HEK293T (cell line): ENCODE measurements at regions of chr7 and their contacts with region 1.

Region 1: DNA sequence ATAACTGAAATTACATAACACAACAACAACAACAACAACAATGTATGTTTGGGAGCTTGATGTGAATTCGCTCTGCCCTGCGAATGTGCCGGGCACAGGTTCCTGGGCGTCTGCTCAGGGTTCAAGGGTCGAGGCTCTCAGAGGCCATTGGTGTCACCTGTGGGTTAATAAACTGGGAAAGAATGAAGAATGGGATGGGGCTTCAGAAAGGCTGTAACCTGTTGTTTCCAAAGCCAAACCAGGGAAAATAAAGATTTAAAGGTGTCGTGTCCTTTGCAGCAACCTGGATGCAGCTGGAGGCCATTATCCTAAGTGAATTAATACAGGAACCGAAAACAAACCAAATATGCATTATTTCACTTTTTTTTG is 17.3 kb upstream of the KLRG2 start:
- DNase-seq: no peak

Region 2: GRCh38 chr7:139054101-139054500 is 446.7 kb before region 1 on chr7:
- CTCF ChIA-PET with region 1: no interaction called
- POLR2A ChIA-PET with region 1: no interaction called
- DNase-seq: no peak

Region 3: DNA sequence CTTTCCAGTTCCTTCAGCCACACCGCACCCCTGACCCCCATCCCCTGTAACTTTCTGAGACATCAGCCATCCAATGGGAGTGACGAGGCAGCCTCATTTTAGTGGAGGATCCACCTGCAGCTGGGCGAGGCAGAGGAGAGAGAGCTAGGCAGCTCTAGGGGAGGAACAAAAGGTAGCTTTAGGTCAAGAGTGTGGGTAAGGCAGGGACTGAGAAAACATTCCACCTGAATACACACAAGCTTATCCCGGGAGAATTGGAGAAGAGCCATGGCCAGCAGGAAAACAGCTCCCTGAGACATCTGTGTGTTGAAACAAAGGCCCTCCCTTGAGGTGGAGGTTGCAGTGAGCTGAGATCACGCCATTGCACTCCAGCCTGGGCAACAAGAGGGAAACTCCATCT is 10.6 kb before region 1 on chr7:
- CTCF ChIA-PET with region 1: interaction called, 7 read pairs
- POLR2A ChIA-PET with region 1: interaction called, 12 read pairs
- DNase-seq: no peak

Region 4: GRCh38 chr7:139725077-139725476 is 224.3 kb after region 1 on chr7:
- CTCF ChIA-PET with region 1: no interaction called
- POLR2A ChIA-PET with region 1: no interaction called
- DNase-seq: no peak